HCT116 (cell line): ENCODE measurements at regions of chr18 and their contacts with region 1.

Region 1: GRCh38 chr18:70082430-70082829 is 123.1 kb downstream of the RTTN start:
- DNase-seq: no peak
- ATAC-seq: no peak
- H3K4me3 ChIP-seq: no peak overlapping the region
- H3K27ac ChIP-seq: no peak overlapping the region
- H3K4me1 ChIP-seq: no peaks in the 10 kb centered on the region
- H3K27me3 ChIP-seq: no peaks in the 10 kb centered on the region
- CTCF ChIP-seq: no peak
- POLR2A ChIP-seq: no peak
- RAD21 ChIP-seq: no peak

Region 2: GRCh38 chr18:68735483-68736343 is 1346.7 kb before region 1 on chr18:
- CTCF ChIA-PET with region 1: no interaction called
- POLR2A ChIA-PET with region 1: no interaction called
- RAD21 ChIA-PET with region 1: no interaction called
- intact Hi-C with region 1: loop called (anchors 10 kb)
- DNase-seq: peak; percentile 23
- ATAC-seq: peak; percentile 69; the same call in 1 of the 2 replicates
- H3K4me3 ChIP-seq: no peak overlapping the region
- H3K27ac ChIP-seq: no peak overlapping the region
- H3K4me1 ChIP-seq: no peaks in the 10 kb centered on the region
- H3K27me3 ChIP-seq: no peaks in the 10 kb centered on the region
- CTCF ChIP-seq: peak; percentile 21 to 80 (median 74); a peak in 5 of 6 replicates
- POLR2A ChIP-seq: no peak
- RAD21 ChIP-seq: peak; percentile 60

Region 3: GRCh38 chr18:68847219-68847837 is 1235.1 kb before region 1 on chr18:
- CTCF ChIA-PET with region 1: interaction called, 7 read pairs
- POLR2A ChIA-PET with region 1: no interaction called
- RAD21 ChIA-PET with region 1: no interaction called
- intact Hi-C with region 1: loop called (anchors 1 kb)
- DNase-seq: peak; percentile 19
- ATAC-seq: peak; percentile 52
- H3K4me3 ChIP-seq: no peak overlapping the region
- H3K27ac ChIP-seq: no peak overlapping the region
- H3K4me1 ChIP-seq: no peaks in the 10 kb centered on the region
- H3K27me3 ChIP-seq: no peaks in the 10 kb centered on the region
- CTCF ChIP-seq: peak; percentile 38 to 75 (median 38); a peak in 5 of 6 replicates
- POLR2A ChIP-seq: no peak
- RAD21 ChIP-seq: peak; percentile 65

Region 4: GRCh38 chr18:68925268-68925667 is 1157.2 kb before region 1 on chr18:
- CTCF ChIA-PET with region 1: no interaction called
- POLR2A ChIA-PET with region 1: no interaction called
- RAD21 ChIA-PET with region 1: no interaction called
- intact Hi-C with region 1: loop called (anchors 10 kb)
- DNase-seq: no peak
- ATAC-seq: peak; percentile 59; the same call in 1 of the 2 replicates
- H3K4me3 ChIP-seq: no peak overlapping the region
- H3K27ac ChIP-seq: no peak overlapping the region
- H3K4me1 ChIP-seq: no peaks in the 10 kb centered on the region
- H3K27me3 ChIP-seq: no peaks in the 10 kb centered on the region
- CTCF ChIP-seq: peak; percentile 10 to 40 (median 22); a peak in 2 of 6 replicates
- POLR2A ChIP-seq: no peak
- RAD21 ChIP-seq: peak; percentile 58

Region 5: DNA sequence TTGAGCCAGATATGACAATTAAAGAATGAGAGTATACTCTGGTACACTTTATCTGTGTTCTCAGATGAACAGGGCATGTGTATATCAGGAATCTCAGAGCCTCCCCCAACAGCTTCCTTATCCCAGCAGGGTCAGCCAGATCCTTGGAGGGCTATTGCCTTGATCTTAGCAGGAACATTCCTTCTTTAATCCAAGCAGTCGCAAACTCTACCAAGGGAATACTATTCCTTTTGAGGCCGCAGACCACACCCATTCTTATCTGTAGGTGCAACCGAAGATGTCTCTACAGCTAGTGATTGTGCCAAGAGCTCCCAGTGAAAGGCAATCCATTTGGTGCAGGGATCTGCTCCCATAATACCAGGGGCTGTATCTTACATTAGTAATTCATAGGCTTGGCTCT is 800.1 kb before region 1 on chr18:
- CTCF ChIA-PET with region 1: no interaction called
- POLR2A ChIA-PET with region 1: no interaction called
- RAD21 ChIA-PET with region 1: no interaction called
- intact Hi-C with region 1: loop called (anchors 10 kb)
- DNase-seq: no peak
- ATAC-seq: no peak
- H3K4me3 ChIP-seq: no peak overlapping the region
- H3K27ac ChIP-seq: no peak overlapping the region
- H3K4me1 ChIP-seq: no peaks in the 10 kb centered on the region
- H3K27me3 ChIP-seq: no peaks in the 10 kb centered on the region
- CTCF ChIP-seq: no peak
- POLR2A ChIP-seq: no peak
- RAD21 ChIP-seq: no peak

Region 6: GRCh38 chr18:70107091-70107490 is 24.7 kb after region 1 on chr18:
- CTCF ChIA-PET with region 1: no interaction called
- POLR2A ChIA-PET with region 1: no interaction called
- RAD21 ChIA-PET with region 1: no interaction called
- intact Hi-C with region 1: no loop called
- DNase-seq: no peak
- ATAC-seq: no peak
- H3K4me3 ChIP-seq: no peak overlapping the region
- H3K27ac ChIP-seq: no peak overlapping the region
- H3K4me1 ChIP-seq: no peaks in the 10 kb centered on the region
- H3K27me3 ChIP-seq: no peaks in the 10 kb centered on the region
- CTCF ChIP-seq: no peak
- POLR2A ChIP-seq: no peak
- RAD21 ChIP-seq: no peak

Region 7: DNA sequence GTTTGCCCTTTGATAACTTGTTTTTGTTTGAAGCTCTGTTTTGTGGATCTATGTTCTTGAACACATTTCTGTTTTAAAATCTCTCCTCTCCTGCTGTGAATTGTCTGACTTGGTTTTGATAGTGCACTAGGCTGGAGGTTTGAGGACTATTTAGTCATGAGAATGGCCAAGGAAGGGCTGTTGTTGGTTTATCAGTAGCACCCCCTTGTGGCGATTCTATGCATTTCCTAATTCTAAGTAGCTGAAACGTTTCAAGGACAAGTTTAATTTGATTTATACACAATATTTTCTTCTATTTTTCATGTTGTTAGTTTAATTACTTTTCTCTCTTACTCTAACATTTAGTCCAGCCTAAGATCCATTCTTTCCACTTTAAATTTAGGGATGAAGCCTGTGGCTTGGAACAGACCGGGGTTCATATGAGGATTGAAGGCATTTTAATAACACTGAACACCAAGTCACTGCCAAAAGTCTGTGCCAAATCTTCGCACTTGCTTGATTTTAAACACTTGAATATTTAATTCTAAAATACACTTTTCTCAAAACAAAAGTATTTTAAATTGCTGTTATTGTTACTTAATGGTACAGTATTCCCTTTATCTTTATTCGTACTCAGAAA is 372.4 kb after region 1 on chr18:
- CTCF ChIA-PET with region 1: interaction called, 3 read pairs
- POLR2A ChIA-PET with region 1: no interaction called
- RAD21 ChIA-PET with region 1: no interaction called
- intact Hi-C with region 1: loop called (anchors 5 kb)
- DNase-seq: peak; percentile 67
- ATAC-seq: peak; percentile 83
- H3K4me3 ChIP-seq: no peak overlapping the region
- H3K27ac ChIP-seq: no peak overlapping the region
- H3K4me1 ChIP-seq: 0 out of 4 replicates have a peak, but pooled peaks cover 0 to 5% of the 10 kb centered on the region in 2 experiments
- H3K27me3 ChIP-seq: no peaks in the 10 kb centered on the region
- CTCF ChIP-seq: peak; percentile 54 to 85 (median 73); a peak in 5 of 6 replicates
- POLR2A ChIP-seq: no peak
- RAD21 ChIP-seq: peak; percentile 84